Activated B cell treated with CpG ODN at 0.5 μM for 24 hours (primary cell): ENCODE measurements at regions of chr9 and their contacts with region 1.

Region 1: DNA sequence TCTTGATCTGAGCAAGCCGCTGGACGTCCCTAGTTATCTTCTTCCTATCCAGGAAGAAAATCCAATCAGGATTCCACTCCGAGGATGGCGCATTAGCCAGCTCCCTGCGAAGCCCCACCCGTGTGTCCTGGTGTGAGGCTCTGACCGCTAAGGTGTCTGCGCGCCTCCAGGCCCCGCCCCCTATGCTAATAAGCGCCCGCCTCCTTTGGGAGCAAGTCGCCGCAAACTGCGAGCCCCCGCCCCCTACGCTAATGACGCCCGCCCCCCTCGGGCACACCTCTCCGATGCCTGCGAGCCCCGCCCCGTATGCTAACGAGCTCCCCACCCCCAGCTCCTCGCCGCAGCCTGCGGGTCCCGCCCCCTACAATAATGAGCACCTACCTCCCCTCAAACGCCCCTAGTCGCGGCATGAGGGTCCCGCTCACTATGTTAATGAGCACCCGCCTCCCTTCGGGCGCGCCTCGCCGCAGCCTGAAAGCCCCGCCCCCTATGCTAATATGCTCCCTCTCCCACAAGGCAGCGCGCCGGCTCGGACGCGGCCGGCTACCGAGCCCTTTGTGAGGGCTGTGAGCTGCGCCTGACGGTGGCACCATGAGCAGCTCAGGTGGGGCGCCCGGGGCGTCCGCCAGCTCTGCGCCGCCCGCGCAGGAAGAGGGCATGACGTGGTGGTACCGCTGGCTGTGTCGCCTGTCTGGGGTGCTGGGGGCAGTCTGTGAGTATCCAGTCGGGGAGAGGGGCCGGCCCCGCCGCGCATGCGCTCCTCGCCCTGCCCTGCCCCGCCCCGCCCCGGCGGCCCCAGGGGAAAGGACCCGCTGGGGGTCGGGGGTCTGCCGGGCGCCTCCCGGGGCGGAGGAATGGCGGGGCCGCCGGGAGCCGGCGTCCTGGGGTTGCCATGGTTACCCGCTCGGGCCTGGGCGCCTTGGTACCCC is at the start of gene CACFD1:
- DNase-seq: peak; percentile 97
- ATAC-seq: peak; percentile 77
- H3K4me3 Mint-ChIP-seq: peak within 1 kb of the TSS; percentile 90
- H3K27ac Mint-ChIP-seq: peak within 1 kb of the TSS; percentile 89
- H3K4me1 Mint-ChIP-seq: peaks cover 20% of the 10 kb centered on the region
- H3K27me3 Mint-ChIP-seq: no peaks in the 10 kb centered on the region
- CTCF ChIP-seq: no peak
- total RNA-seq, gene CACFD1: 13.8 and 15.0 TPM in 2 replicates

Region 2: GRCh38 chr9:133347985-133348717 is 111.6 kb before region 1 on chr9 and contains the starts of genes MED22 and RPL7A:
- CTCF ChIA-PET with region 1: no interaction called
- POLR2A ChIA-PET with region 1: interaction called, 27 read pairs
- intact Hi-C with region 1: no loop called
- DNase-seq: peak; percentile 82
- ATAC-seq: peak; percentile 83
- H3K4me3 Mint-ChIP-seq: peak within 1 kb of the TSS; percentile 99
- H3K27ac Mint-ChIP-seq: peak within 1 kb of the TSS; percentile 96
- H3K4me1 Mint-ChIP-seq: peaks cover 45% of the 10 kb centered on the region
- H3K27me3 Mint-ChIP-seq: no peaks in the 10 kb centered on the region
- CTCF ChIP-seq: no peak
- total RNA-seq, gene MED22: 40.7 and 45.7 TPM in 2 replicates
- total RNA-seq, gene RPL7A: 3,786 and 4,134 TPM in 2 replicates

Region 3: GRCh38 chr9:133375724-133376654 is 83.8 kb before region 1 on chr9 and contains the starts of genes STKLD1 and SURF4:
- CTCF ChIA-PET with region 1: no interaction called
- POLR2A ChIA-PET with region 1: interaction called, 3 read pairs
- intact Hi-C with region 1: loop called (anchors 1 kb)
- DNase-seq: peak; percentile 99
- ATAC-seq: peak; percentile 96
- H3K4me3 Mint-ChIP-seq: peak within 1 kb of the TSS; percentile 91
- H3K27ac Mint-ChIP-seq: peak within 1 kb of the TSS; percentile 74
- H3K4me1 Mint-ChIP-seq: peaks cover 39% of the 10 kb centered on the region
- H3K27me3 Mint-ChIP-seq: no peaks in the 10 kb centered on the region
- CTCF ChIP-seq: no peak
- total RNA-seq, gene STKLD1: 0.37 and 0.44 TPM in 2 replicates
- total RNA-seq, gene SURF4: 57.0 and 58.2 TPM in 2 replicates

Region 4: DNA sequence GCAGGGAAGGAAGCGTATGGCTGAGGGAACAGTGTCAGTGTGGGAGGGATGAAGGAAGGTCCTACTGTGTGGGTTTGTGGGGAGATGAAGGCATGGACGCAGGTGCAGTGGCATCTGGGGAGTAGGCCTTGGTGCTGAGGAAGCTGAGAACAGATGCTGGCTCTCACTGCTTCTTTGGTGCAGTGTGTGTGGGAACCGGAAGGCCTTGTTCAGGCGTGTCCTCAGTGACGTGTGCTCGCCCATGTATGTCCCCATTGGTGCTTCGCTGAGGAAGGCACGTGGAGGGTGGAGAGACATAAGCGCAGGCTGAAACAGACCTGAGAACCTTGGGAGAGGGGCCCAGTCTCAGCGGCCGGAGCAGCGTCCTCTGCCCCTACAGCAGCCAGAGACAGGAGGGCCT is 18.9 kb before region 1 on chr9:
- CTCF ChIA-PET with region 1: no interaction called
- POLR2A ChIA-PET with region 1: interaction called, 21 read pairs
- intact Hi-C with region 1: loop called (anchors 1 kb)
- DNase-seq: peak; percentile 34
- ATAC-seq: peak; percentile 98
- H3K4me3 Mint-ChIP-seq: no peak overlapping the region
- H3K27ac Mint-ChIP-seq: peak overlapping the region; percentile 92
- H3K4me1 Mint-ChIP-seq: peaks cover 30% of the 10 kb centered on the region
- H3K27me3 Mint-ChIP-seq: no peaks in the 10 kb centered on the region
- CTCF ChIP-seq: no peak

Region 5: DNA sequence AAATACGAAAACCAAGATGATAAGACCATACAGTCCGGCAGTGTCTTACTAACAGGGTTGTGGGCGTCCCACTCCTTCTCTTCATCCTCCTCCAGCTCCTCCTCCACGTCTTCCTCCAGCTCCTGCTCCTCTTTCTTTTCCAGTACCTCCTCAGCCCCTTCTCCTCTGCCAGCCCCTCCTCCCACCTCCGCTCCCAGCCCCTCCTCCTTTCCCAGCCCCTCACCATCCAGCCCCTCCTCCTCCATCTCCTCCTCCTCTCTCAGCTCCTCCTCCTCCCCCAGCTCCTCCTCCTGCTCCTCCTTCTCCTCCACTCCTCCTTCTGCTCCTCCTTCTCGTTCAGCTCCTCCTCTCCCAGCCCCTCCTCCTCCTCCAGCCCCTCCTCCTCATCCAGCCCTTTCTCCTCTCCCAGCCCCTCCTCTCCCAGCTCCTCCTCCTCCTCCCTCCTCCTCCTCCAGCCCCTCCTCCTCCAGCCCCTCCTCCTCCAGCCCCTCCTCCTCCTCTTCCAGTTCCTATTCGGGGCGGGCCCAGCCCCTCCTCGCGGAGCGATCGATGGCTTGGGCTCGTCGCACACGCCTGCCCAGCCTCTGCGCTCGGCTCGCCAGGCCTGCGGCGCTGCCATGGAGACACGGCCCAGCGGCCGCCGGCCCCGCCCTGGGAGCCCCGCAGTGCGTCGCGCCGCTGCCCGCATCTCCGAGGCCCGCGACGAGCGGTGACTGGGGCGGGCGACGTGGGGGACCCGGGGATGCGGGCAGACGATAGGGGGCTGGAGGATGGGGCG is 565.3 kb after region 1 on chr9 and contains the start of gene BRD3OS:
- CTCF ChIA-PET with region 1: no interaction called
- POLR2A ChIA-PET with region 1: no interaction called
- intact Hi-C with region 1: loop called (anchors 1 kb)
- DNase-seq: peak; percentile 85
- ATAC-seq: peak; percentile 94
- H3K4me3 Mint-ChIP-seq: peak within 1 kb of the TSS; percentile 83
- H3K27ac Mint-ChIP-seq: peak within 1 kb of the TSS; percentile 61
- H3K4me1 Mint-ChIP-seq: peaks cover 16% of the 10 kb centered on the region
- H3K27me3 Mint-ChIP-seq: no peaks in the 10 kb centered on the region
- CTCF ChIP-seq: no peak
- total RNA-seq, gene BRD3OS: 17.3 and 19.3 TPM in 2 replicates